ENCODE measurements at regions of chr5 and their contacts with region 1.

Region 1: DNA sequence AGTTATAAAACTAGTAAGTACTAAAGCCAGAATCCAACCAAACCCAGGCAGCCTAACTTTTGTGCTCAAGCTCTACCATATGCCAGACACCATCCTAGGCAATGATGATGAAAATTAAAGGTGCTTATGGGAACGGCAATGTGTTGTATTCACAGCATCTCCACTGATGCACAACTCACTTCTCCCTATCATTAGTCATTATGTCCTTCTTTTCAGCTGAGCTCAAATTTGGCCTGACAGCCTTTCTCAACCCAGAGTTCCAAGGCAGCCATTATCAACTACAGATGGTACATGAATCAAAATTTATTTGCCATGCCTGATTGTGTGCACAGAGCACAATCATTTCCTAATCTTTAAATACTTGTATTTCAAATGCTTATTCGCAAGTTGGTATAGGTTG is 121.6 kb upstream of the TNPO1 start:
- DNase-seq: no peak
- ATAC-seq: no peak
- H3K4me3 ChIP-seq: no peak overlapping the region
- H3K27ac ChIP-seq: no peak overlapping the region
- H3K4me1 ChIP-seq: no peaks in the 10 kb centered on the region
- H3K27me3 ChIP-seq: 0 out of 2 replicates have a peak, but pooled peaks cover 13% of the 10 kb centered on the region
- CTCF ChIP-seq: no peak
- POLR2A ChIP-seq: no peak
- RAD21 ChIP-seq: no peak

Region 2: GRCh38 chr5:72760259-72760658 is 65.4 kb after region 1 on chr5:
- CTCF ChIA-PET with region 1: no interaction called
- POLR2A ChIA-PET with region 1: no interaction called
- RAD21 ChIA-PET with region 1: no interaction called
- intact Hi-C with region 1: no loop called
- DNase-seq: no peak
- ATAC-seq: no peak
- H3K4me3 ChIP-seq: no peak overlapping the region
- H3K27ac ChIP-seq: no peak overlapping the region
- H3K4me1 ChIP-seq: no peaks in the 10 kb centered on the region
- H3K27me3 ChIP-seq: no peaks in the 10 kb centered on the region
- CTCF ChIP-seq: no peak
- POLR2A ChIP-seq: no peak
- RAD21 ChIP-seq: no peak

Region 3: GRCh38 chr5:73419465-73420390 is 724.9 kb after region 1 on chr5:
- CTCF ChIA-PET with region 1: no interaction called
- POLR2A ChIA-PET with region 1: no interaction called
- RAD21 ChIA-PET with region 1: no interaction called
- intact Hi-C with region 1: loop called (anchors 5 kb)
- DNase-seq: no peak
- ATAC-seq: no peak
- H3K4me3 ChIP-seq: no peak overlapping the region
- H3K27ac ChIP-seq: no peak overlapping the region
- H3K4me1 ChIP-seq: peaks cover 0 to 6% of the 10 kb centered on the region in 2 experiments; a peak in 2 of 4 replicates
- H3K27me3 ChIP-seq: no peaks in the 10 kb centered on the region
- CTCF ChIP-seq: no peak
- POLR2A ChIP-seq: no peak
- RAD21 ChIP-seq: no peak